Activated CD8-positive, alpha-beta T cell treated with anti-CD3 and anti-CD28 coated beads for 36 hours (primary cell): ENCODE measurements at regions of chr1 and their contacts with region 1.

Region 1: GRCh38 chr1:204806943-204807687 is 63.5 kb upstream of the NFASC start:
- DNase-seq: peak; percentile 91
- ATAC-seq: peak; percentile 95
- H3K4me3 Mint-ChIP-seq: peak overlapping the region; percentile 76
- H3K27ac Mint-ChIP-seq: peak overlapping the region; percentile 73
- H3K4me1 Mint-ChIP-seq: peaks cover 11% of the 10 kb centered on the region
- H3K27me3 Mint-ChIP-seq: no peaks in the 10 kb centered on the region
- CTCF ChIP-seq: peak; percentile 6

Region 2: DNA sequence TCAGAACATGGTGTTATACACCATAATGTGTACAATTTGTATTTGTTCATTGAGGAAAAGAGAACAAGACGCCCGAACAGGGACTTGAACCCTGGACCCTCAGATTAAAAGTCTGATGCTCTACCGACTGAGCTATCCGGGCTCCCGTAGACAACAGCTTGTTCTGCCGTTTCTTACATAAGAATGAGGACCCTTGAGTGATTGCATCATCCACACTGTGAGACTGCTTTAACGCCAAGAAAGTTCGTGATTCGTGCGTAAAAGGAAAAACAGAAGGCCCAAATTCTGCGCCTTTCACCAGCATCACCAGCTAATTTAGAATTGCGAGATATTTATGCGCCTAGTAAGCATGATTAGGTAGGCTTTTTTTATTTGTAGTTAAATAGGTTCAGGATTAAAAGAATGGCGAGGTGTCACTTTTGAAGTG is 300.1 kb before region 1 on chr1:
- CTCF ChIA-PET with region 1: interaction called, 16 read pairs
- POLR2A ChIA-PET with region 1: no interaction called
- intact Hi-C with region 1: no loop called
- DNase-seq: peak; percentile 93
- ATAC-seq: peak; percentile 75
- H3K4me3 Mint-ChIP-seq: peak overlapping the region; percentile 89
- H3K27ac Mint-ChIP-seq: peak overlapping the region; percentile 99
- H3K4me1 Mint-ChIP-seq: peaks cover 26% of the 10 kb centered on the region
- H3K27me3 Mint-ChIP-seq: peaks cover 3% of the 10 kb centered on the region
- CTCF ChIP-seq: no peak

Region 3: DNA sequence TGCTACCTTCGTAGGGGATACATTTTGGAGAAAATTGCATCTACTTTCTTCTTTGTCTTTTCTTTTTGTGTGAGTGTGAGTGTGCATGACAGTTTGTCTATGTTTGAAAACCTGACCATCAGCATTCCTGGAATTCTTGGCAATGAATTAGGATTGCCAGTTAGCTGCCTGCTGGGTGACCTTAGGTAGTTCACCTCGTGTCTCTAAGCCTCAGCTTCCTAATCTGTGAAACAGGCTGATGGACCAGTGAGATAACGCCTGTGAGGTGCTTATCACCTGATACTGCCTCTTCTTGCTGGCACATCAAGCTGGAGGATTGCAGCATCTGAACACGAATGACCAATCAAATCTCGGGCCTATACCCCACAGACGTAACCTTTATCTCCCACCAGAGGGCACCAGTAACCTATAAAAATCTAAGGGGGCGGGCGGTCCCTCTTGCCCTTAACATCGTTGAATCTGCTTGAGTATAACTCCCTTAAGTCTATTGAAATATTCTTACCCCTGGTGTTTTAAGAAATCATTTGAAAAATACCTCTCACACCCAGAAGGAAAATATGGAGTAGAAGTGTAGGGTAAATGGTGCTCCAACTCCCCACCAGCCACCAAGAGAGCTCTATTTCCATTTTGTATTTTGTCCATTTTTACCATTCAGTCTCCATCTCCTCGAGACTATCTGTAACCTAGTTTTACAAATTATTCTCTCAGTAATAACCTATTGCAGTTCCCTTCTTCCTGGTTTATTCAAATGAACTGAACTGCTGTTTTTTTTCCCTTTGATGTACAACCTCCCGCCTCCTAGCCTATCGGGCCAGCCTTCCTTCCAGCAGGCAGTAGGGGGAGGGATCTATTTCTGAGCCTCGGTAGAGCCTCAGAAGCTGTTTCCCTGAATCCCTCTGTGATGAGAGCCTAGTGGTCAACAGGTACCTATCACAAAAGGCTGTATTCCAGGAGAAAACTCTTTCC is 241.2 kb before region 1 on chr1:
- CTCF ChIA-PET with region 1: interaction called, 176 read pairs
- POLR2A ChIA-PET with region 1: interaction called, 4 read pairs
- intact Hi-C with region 1: loop called (anchors 2 kb)
- DNase-seq: peak; percentile 80
- ATAC-seq: peak; percentile 86
- H3K4me3 Mint-ChIP-seq: no peak overlapping the region
- H3K27ac Mint-ChIP-seq: peak overlapping the region; percentile 77
- H3K4me1 Mint-ChIP-seq: peaks cover 45% of the 10 kb centered on the region
- H3K27me3 Mint-ChIP-seq: no peaks in the 10 kb centered on the region
- CTCF ChIP-seq: peak; percentile 66

Region 4: DNA sequence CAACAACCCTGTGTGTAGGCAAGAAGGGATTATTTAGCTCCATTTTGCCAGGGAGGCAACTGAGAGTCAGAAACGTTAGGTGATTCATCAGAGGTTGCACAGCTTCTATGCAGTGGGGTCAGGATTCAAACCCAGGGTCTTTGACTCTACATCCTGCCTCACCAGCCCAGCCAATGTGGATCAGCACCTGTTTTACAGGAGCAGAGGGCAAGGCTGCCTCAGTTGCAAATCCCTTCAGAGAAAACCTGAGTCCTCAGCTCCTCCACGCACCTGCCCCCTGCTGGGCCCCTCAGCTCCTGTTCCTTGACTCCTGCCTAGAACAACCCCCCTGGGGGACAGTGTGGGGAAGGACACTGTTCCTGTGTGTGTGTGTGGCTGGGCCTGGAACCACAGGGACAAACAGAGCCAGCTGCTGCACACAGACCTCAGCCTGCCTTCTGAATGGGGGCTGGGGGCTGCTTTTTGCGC is 183.2 kb before region 1 on chr1:
- CTCF ChIA-PET with region 1: interaction called, 16 read pairs
- POLR2A ChIA-PET with region 1: no interaction called
- intact Hi-C with region 1: no loop called
- DNase-seq: peak; percentile 32
- ATAC-seq: peak; percentile 69
- H3K4me3 Mint-ChIP-seq: no peak overlapping the region
- H3K27ac Mint-ChIP-seq: no peak overlapping the region
- H3K4me1 Mint-ChIP-seq: no peaks in the 10 kb centered on the region
- H3K27me3 Mint-ChIP-seq: no peaks in the 10 kb centered on the region
- CTCF ChIP-seq: no peak

Region 5: DNA sequence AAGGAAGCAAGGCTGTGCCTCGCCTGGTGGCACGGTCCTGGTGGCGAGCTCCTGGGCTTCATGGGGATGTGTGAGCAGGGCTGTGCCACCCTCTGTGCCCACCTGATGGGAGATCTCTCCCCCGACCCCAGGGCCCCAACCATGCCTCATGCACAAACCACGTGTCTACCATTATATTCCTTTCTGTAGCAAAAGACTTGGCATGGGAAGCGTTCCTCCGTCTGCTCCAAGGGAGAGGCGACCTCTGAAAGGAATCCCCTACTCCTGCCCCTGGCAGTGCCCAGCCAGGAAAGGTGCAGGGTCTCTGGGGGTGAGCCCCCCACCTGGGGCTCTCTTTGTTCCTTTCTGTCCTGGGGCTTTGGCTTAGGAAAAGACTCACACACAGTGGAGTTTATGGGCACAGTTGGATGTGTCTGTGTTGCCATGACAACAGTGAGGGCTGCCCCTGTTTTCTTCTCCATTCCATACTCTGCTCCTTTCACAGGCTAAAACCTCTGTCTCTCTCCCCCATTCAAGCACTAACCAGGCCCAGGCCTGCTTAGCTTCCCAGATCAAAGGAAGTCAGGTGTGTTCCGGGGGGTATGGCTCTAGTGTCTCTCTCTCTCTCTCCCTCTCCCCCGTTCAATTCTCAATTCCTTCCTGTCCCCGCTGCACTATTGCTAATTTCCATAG is 100.1 kb before region 1 on chr1:
- CTCF ChIA-PET with region 1: interaction called, 14 read pairs
- POLR2A ChIA-PET with region 1: no interaction called
- intact Hi-C with region 1: no loop called
- DNase-seq: no peak
- ATAC-seq: no peak
- H3K4me3 Mint-ChIP-seq: no peak overlapping the region
- H3K27ac Mint-ChIP-seq: no peak overlapping the region
- H3K4me1 Mint-ChIP-seq: peaks cover 23% of the 10 kb centered on the region
- H3K27me3 Mint-ChIP-seq: no peaks in the 10 kb centered on the region
- CTCF ChIP-seq: no peak

Region 6: DNA sequence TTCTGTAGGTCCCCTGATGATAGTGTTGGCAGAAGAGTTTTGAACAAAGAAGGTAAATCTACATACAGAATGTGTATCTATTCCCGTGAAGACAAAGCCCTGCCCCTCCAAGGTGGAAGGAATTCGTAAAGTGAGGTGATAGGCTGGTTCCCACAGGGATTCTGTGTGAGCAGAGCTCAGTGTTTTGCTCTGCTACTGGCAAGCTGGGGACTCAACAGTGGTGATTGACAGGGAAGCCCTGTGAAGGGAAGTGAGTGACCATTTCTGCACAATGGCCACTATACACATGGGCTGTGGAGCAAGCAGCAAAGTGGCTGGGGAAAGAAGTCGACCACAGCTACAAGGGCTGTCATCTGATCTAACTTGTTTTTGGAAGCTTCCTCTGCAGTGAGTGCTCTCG is 31.6 kb before region 1 on chr1:
- CTCF ChIA-PET with region 1: interaction called, 18 read pairs
- POLR2A ChIA-PET with region 1: no interaction called
- intact Hi-C with region 1: no loop called
- DNase-seq: no peak
- ATAC-seq: no peak
- H3K4me3 Mint-ChIP-seq: no peak overlapping the region
- H3K27ac Mint-ChIP-seq: no peak overlapping the region
- H3K4me1 Mint-ChIP-seq: no peaks in the 10 kb centered on the region
- H3K27me3 Mint-ChIP-seq: peaks cover 2% of the 10 kb centered on the region
- CTCF ChIP-seq: no peak

Region 7: DNA sequence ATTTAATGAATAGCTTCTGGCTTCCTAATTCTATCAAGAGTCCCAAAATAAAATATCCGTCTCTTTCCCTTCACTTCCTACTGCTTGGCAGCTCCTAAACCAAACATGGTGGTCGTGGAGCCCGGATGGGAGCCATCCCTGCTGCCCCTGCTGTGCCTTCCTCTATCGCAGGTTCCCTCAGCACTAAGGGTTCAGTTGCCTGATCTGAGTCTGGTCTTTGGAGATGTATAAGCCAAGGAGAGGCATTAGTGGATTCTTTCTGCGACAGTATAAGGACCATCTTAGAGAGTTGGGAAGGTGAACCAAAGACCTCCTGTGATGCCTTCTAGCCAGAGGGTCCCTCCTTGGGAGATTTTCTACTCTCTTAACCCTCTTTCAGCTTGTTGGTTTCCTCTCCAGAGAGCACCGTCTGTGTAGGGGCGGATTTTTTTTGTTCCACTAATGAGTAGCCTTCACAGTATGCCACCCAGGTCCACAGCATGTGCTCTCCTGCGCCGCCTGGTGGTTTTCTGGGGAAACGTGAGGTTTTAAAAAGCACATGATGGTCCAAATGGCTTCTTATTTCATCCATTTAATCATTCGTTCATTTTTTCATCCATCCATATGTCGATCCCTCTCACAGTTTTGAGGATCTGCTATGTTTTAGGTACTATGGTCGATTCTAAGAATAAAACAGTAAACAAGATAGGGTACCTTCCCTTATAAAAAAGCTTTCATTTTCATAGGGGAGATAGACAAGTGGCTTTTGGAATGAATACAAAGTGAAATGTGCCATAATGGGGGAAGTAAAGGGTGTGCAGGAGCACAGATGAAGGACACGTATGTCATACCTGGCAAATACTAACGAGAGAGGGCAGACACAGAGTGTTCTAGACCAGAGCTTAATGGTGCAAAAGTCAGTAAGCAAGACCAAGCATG is 134.6 kb after region 1 on chr1:
- CTCF ChIA-PET with region 1: interaction called, 23 read pairs
- POLR2A ChIA-PET with region 1: no interaction called
- intact Hi-C with region 1: no loop called
- DNase-seq: peak; percentile 77
- ATAC-seq: peak; percentile 79
- H3K4me3 Mint-ChIP-seq: no peak overlapping the region
- H3K27ac Mint-ChIP-seq: no peak overlapping the region
- H3K4me1 Mint-ChIP-seq: no peaks in the 10 kb centered on the region
- H3K27me3 Mint-ChIP-seq: peaks cover 3% of the 10 kb centered on the region
- CTCF ChIP-seq: peak; percentile 89